Activated naive CD4-positive, alpha-beta T cell treated with anti-CD3 and anti-CD28 coated beads for 36 hours (primary cell): ENCODE measurements at regions of chr6 and their contacts with region 1.

Region 1: GRCh38 chr6:6008648-6009421 is 2.1 kb upstream of the NRN1 start:
- DNase-seq: peak; percentile 73
- H3K4me3 Mint-ChIP-seq: peak overlapping the region; percentile 67
- H3K27ac Mint-ChIP-seq: no peak overlapping the region
- H3K4me1 Mint-ChIP-seq: peaks cover 26% of the 10 kb centered on the region
- H3K27me3 Mint-ChIP-seq: peaks cover 66% of the 10 kb centered on the region

Region 2: DNA sequence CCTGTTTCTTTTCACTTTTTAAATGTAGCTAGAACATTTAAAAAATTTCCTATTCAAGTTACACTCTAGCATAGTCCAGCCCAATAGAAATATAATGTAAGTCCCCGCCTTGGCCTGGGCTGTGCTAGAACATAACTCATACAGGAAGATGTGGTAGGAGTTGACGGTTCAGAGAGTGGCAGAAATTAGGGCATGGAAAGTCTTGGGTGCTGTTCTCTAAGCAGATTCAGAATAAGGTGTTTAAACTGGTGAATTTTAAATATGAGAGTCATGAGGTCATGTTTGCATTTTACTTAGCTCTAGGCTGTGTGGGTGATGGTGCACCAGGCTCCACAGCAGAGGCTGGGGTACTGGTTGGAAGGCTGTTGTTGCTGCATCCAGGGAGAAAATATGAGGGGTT is 491.0 kb before region 1 on chr6:
- CTCF ChIA-PET with region 1: no interaction called
- intact Hi-C with region 1: loop called (anchors 5 kb)
- DNase-seq: peak; percentile 72
- H3K4me3 Mint-ChIP-seq: no peak overlapping the region
- H3K27ac Mint-ChIP-seq: peak overlapping the region; percentile 53
- H3K4me1 Mint-ChIP-seq: peaks cover 60% of the 10 kb centered on the region
- H3K27me3 Mint-ChIP-seq: no peaks in the 10 kb centered on the region

Region 3: DNA sequence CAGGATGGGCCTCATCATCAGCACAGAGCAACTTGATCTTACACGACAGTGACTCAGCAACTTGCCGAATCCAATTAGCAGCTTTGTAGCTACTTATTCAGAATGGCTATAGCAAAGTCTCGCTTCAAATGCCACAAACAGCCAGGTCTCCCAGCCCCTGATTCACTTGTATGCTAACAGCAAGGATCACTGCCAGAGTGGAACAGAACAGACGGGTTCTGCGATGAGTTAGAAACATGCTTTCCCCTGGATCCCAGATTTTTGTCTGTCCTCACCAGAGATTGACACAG is 256.5 kb before region 1 on chr6:
- CTCF ChIA-PET with region 1: no interaction called
- intact Hi-C with region 1: no loop called
- DNase-seq: no peak
- H3K4me3 Mint-ChIP-seq: no peak overlapping the region
- H3K27ac Mint-ChIP-seq: no peak overlapping the region
- H3K4me1 Mint-ChIP-seq: no peaks in the 10 kb centered on the region
- H3K27me3 Mint-ChIP-seq: no peaks in the 10 kb centered on the region

Region 4: GRCh38 chr6:5813625-5814027 is 195.2 kb before region 1 on chr6:
- CTCF ChIA-PET with region 1: no interaction called
- intact Hi-C with region 1: loop called (anchors 5 kb)
- DNase-seq: peak; percentile 36
- H3K4me3 Mint-ChIP-seq: no peak overlapping the region
- H3K27ac Mint-ChIP-seq: no peak overlapping the region
- H3K4me1 Mint-ChIP-seq: peaks cover 29% of the 10 kb centered on the region
- H3K27me3 Mint-ChIP-seq: no peaks in the 10 kb centered on the region

Region 5: DNA sequence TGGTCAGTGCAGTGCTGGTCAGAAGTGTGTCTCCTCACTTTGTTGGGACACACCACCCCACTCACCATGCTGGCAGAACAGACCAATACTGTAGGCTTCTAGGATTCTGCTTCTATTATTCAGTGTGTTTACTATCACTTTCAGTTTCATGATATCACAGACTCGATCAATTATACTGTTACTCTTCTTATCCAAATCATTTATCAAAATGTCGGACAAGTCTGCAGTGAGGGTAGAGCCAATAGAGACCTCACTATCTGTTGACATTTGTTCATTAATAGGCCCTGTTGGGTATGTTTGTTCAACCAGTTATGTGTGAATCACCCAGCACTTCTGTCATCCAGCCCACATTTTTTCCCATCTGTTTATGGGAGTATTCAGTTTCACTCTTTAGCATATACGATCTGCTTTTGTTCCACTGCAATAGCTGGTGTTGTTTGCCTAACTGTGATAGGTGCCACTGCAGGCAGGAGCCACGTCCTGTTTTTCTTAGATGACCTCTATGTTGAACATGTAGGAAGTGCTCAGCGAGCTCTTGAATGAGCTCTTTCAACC is 142.2 kb before region 1 on chr6:
- CTCF ChIA-PET with region 1: no interaction called
- intact Hi-C with region 1: loop called (anchors 5 kb)
- DNase-seq: peak; percentile 43
- H3K4me3 Mint-ChIP-seq: peak overlapping the region; percentile 64
- H3K27ac Mint-ChIP-seq: peak overlapping the region; percentile 76
- H3K4me1 Mint-ChIP-seq: peaks cover 47% of the 10 kb centered on the region
- H3K27me3 Mint-ChIP-seq: no peaks in the 10 kb centered on the region

Region 6: DNA sequence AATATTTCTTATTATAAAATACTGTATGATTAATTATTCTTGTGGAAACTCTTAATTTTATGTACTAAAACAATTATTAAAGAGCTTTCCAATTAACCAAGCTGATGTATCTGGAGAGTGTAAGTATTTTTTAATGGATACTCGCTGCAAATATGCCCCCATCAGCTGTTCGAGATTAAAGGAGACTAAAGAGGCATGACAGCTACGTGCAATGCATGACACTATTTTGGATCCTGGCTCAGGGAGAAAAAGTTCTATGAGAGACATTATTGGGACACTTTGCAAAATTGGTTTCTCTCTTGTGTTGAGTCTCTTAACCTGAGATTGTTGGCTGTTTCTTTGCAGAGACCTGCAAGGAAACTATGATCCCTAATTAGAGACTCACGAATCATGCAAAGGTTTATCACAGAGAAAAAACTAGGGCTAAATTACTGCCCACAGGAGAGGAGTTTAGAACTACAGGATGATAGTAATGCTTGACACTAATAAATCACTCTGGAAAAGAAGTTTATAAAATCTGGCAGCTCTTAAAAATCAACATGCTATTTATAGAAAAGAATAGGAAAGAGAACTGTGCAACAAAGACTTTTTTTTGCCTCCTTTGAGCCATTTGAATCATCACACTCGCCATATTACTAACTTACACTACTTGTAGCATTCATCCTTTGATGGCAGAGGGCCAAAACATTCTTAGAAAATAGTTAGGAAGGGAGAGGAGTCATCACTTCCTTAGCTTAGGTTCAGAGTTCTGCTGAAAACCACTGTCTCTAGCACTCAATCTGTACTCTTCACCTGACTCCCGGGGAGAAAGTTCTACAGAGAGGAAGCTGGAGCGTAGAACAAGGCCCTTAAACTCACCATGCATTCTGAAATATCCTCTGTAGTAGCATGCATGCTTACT is 27.5 kb before region 1 on chr6:
- CTCF ChIA-PET with region 1: interaction called, 3 read pairs
- intact Hi-C with region 1: loop called (anchors 2 kb)
- DNase-seq: peak; percentile 17
- H3K4me3 Mint-ChIP-seq: no peak overlapping the region
- H3K27ac Mint-ChIP-seq: no peak overlapping the region
- H3K4me1 Mint-ChIP-seq: peaks cover 30% of the 10 kb centered on the region
- H3K27me3 Mint-ChIP-seq: no peaks in the 10 kb centered on the region

Region 7: GRCh38 chr6:6366803-6367202 is 358.0 kb after region 1 on chr6:
- CTCF ChIA-PET with region 1: no interaction called
- intact Hi-C with region 1: no loop called
- DNase-seq: no peak
- H3K4me3 Mint-ChIP-seq: no peak overlapping the region
- H3K27ac Mint-ChIP-seq: no peak overlapping the region
- H3K4me1 Mint-ChIP-seq: no peaks in the 10 kb centered on the region
- H3K27me3 Mint-ChIP-seq: peaks cover 18% of the 10 kb centered on the region